A673 (cell line): ENCODE measurements at regions of chr1 and their contacts with region 1.

Region 1: DNA sequence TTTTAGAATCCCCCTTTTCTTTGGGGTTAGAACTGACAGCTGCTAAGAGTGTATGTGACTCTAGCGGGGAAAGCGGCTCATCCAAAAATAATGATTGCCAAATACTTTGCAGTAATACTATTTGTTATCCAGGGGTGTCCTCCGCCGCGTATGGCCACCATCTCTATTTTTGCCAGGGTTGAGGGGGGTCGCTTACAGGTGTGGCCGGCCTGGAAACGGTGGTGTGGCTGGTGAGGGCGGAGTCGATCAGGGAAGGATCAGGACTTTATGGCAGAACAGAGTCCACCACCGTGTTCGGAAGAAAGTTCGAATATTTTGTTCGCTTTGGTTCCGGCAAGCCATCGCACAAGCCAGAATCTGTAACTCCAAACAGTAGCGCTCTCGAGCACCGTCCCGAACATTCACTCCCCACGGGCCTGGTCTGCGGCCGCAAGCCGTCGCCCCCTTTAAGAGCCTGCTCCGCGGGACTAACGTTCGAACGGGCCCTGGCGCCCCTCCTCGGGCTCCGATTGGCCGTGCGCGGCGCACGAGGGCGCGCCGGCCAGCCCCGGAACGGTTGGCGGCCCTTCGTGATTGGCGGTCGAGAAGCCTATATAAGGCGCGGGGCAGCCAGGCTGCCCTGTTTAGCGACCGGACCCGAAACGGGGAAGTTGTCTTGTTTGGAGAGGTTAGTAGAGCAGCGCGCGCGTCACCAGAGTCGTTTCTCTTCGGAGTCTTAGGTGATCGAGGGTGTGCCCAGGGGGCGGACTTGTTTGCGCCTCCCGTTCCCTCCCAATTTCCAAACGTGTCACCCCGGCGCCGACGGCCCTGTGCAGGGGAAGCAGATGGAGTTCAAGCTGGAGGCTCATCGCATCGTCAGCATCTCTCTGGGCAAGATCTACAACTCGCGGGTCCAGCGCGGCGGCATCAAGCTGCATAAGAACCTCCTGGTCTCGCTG is at the start of gene IER5:
- DNase-seq: peak; percentile 98
- H3K4me3 ChIP-seq: peak within 1 kb of the TSS; percentile 90
- H3K27ac ChIP-seq: peak within 1 kb of the TSS; percentile 76
- H3K4me1 ChIP-seq: peaks cover 32% of the 10 kb centered on the region
- H3K27me3 ChIP-seq: no peaks in the 10 kb centered on the region
- CTCF ChIP-seq: no peak
- total RNA-seq, gene IER5: 25.5 and 28.2 TPM in 2 replicates

Region 2: DNA sequence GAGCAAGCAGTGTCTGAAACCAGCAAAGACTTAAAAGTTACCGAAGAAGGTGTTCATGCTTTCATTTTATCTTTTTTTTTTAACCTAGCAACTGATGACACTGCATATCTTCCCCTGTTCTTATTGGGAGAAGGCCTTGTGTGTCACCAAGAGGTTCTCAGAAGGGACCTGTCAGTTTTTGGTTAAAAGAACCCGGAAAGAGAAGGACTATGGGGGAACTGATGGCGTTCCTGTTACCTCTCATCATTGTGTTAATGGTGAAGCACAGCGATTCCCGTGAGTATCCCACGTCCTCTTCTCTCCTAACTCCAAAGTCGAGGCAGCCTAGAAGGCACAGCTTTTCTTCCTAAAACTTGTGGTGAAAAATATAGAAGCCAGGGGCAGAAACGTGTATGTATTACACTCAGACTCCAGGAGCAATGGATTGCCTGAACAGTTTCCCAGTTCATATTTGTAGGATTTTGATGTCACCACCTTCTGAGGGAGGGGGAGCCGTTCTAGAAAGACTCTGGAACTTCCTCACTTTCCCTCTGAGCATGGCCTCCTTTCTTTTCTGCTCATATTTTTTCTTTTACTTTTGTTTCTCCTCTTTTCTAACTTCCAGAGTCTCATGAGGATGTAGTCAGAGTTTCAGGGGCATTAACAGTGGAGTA is 54.4 kb before region 1 on chr1 and contains the start of gene MR1:
- CTCF ChIA-PET with region 1: no interaction called
- POLR2A ChIA-PET with region 1: no interaction called
- intact Hi-C with region 1: loop called (anchors 5 kb)
- DNase-seq: peak; percentile 90
- H3K4me3 ChIP-seq: peak within 1 kb of the TSS; percentile 43
- H3K27ac ChIP-seq: peak within 1 kb of the TSS; percentile 59
- H3K4me1 ChIP-seq: peaks cover 4% of the 10 kb centered on the region
- H3K27me3 ChIP-seq: no peaks in the 10 kb centered on the region
- CTCF ChIP-seq: no peak
- total RNA-seq, gene MR1: 2.6 and 2.8 TPM in 2 replicates

Region 3: GRCh38 chr1:181105134-181106021 is 17.0 kb after region 1 on chr1:
- CTCF ChIA-PET with region 1: interaction called, 14 read pairs
- POLR2A ChIA-PET with region 1: interaction called, 3 read pairs
- intact Hi-C with region 1: no loop called
- DNase-seq: peak; percentile 97
- H3K4me3 ChIP-seq: peak overlapping the region; percentile 70
- H3K27ac ChIP-seq: peak overlapping the region; percentile 93
- H3K4me1 ChIP-seq: peaks cover 59% of the 10 kb centered on the region
- H3K27me3 ChIP-seq: no peaks in the 10 kb centered on the region
- CTCF ChIP-seq: no peak

Region 4: DNA sequence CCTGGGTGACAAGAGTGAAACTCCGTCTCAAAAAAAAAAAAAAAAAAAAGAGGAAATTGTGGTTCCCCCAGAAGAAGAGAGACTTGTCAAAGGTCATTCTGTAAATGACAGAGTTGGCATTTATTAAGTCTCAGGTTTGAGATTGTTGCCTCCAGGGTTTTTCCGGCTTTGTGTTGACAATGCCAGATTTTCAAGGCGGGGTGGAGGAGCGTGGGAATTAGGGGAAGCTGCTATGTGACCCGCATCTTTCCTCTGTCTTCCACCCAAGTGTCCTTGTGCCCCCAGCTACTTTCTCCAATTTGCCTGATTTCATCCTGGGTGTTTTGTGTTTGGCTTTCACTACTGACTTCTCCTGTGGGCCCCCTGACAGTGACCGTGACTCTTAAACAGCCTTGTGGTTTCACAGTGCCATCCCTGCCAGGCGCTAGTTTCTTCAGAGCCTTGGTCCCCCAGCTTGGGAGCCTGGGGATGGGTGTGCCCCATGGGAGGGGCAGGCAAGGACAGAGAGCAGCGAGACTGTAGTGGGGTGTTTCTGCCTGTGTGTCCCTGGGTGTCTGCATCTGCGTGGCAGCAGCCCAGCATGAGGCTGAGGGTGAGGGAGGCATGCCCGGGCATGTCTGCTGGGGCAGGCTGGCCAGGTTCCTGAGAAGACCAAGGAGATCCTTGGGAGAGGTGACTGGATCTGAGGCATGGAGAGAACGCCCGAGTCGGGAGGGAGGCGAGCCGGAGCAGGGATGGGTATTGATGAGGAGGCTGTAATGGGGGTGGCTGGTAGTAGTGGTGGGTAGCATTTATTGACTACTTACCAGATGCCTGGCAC is 46.4 kb after region 1 on chr1:
- CTCF ChIA-PET with region 1: interaction called, 7 read pairs
- POLR2A ChIA-PET with region 1: interaction called, 14 read pairs
- intact Hi-C with region 1: no loop called
- DNase-seq: peak; percentile 35
- H3K4me3 ChIP-seq: no peak overlapping the region
- H3K27ac ChIP-seq: no peak overlapping the region
- H3K4me1 ChIP-seq: peaks cover 26% of the 10 kb centered on the region
- H3K27me3 ChIP-seq: no peaks in the 10 kb centered on the region
- CTCF ChIP-seq: no peak

Region 5: GRCh38 chr1:181251001-181251712 is 162.8 kb after region 1 on chr1:
- CTCF ChIA-PET with region 1: no interaction called
- POLR2A ChIA-PET with region 1: no interaction called
- intact Hi-C with region 1: no loop called
- DNase-seq: peak; percentile 16
- H3K4me3 ChIP-seq: no peak overlapping the region
- H3K27ac ChIP-seq: no peak overlapping the region
- H3K4me1 ChIP-seq: no peaks in the 10 kb centered on the region
- H3K27me3 ChIP-seq: no peaks in the 10 kb centered on the region
- CTCF ChIP-seq: no peak